ENCODE measurements at regions of chr12 and their contacts with region 1.

Region 1: GRCh38 chr12:121128970-121129810 is 3.5 kb upstream of the P2RX7 start:
- DNase-seq: peak; percentile 65
- ATAC-seq: peak; percentile 87
- H3K4me3 Mint-ChIP-seq: peak overlapping the region; percentile 87
- H3K27ac Mint-ChIP-seq: peak overlapping the region; percentile 99
- H3K4me1 Mint-ChIP-seq: peaks cover 68% of the 10 kb centered on the region
- H3K27me3 Mint-ChIP-seq: no peaks in the 10 kb centered on the region
- CTCF ChIP-seq: no peak

Region 2: DNA sequence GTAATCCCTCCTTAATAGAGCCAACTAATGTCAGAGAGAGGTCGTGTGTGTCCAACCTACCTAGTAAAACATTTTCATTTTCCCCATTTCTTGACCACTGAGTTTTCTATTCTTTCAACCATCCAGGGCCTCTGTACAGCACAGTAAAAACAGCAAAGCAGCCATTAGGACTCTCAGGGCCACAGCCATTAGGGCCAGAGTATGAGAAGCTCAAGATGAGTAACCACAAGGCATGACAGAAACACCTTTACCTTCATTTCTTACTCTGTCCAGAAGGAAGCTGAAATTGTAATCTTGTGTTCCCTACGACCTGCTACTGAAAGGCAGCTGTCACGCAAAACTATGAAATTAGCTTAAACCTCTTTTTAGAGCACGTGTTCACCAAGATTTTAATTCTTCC is 227.4 kb before region 1 on chr12:
- CTCF ChIA-PET with region 1: no interaction called
- POLR2A ChIA-PET with region 1: no interaction called
- intact Hi-C with region 1: no loop called
- DNase-seq: no peak
- ATAC-seq: no peak
- H3K4me3 Mint-ChIP-seq: peak overlapping the region; percentile 97
- H3K27ac Mint-ChIP-seq: peak overlapping the region; percentile 15
- H3K4me1 Mint-ChIP-seq: peaks cover 44% of the 10 kb centered on the region
- H3K27me3 Mint-ChIP-seq: no peaks in the 10 kb centered on the region
- CTCF ChIP-seq: no peak

Region 3: GRCh38 chr12:121144416-121144914 is 15.3 kb after region 1 on chr12:
- CTCF ChIA-PET with region 1: no interaction called
- POLR2A ChIA-PET with region 1: interaction called, 5 read pairs
- intact Hi-C with region 1: loop called (anchors 1 kb)
- DNase-seq: no peak
- ATAC-seq: peak; percentile 55
- H3K4me3 Mint-ChIP-seq: peak overlapping the region; percentile 26
- H3K27ac Mint-ChIP-seq: peak overlapping the region; percentile 81
- H3K4me1 Mint-ChIP-seq: peaks cover 24% of the 10 kb centered on the region
- H3K27me3 Mint-ChIP-seq: no peaks in the 10 kb centered on the region
- CTCF ChIP-seq: no peak

Region 4: GRCh38 chr12:121417847-121418246 is 288.7 kb after region 1 on chr12:
- CTCF ChIA-PET with region 1: no interaction called
- POLR2A ChIA-PET with region 1: no interaction called
- intact Hi-C with region 1: no loop called
- DNase-seq: no peak
- ATAC-seq: no peak
- H3K4me3 Mint-ChIP-seq: no peak overlapping the region
- H3K27ac Mint-ChIP-seq: no peak overlapping the region
- H3K4me1 Mint-ChIP-seq: peaks cover 2% of the 10 kb centered on the region
- H3K27me3 Mint-ChIP-seq: no peaks in the 10 kb centered on the region
- CTCF ChIP-seq: no peak